ENCODE measurements at regions of chr12 and their contacts with region 1.

Region 1: GRCh38 chr12:100142851-100143559 is at the start of gene BLTP3B:
- DNase-seq: peak; percentile 92
- ATAC-seq: peak; percentile 91
- H3K4me3 Mint-ChIP-seq: peak within 1 kb of the TSS; percentile 95
- H3K27ac Mint-ChIP-seq: peak within 1 kb of the TSS; percentile 97
- H3K4me1 Mint-ChIP-seq: peaks cover 41% of the 10 kb centered on the region
- H3K27me3 Mint-ChIP-seq: no peaks in the 10 kb centered on the region
- total RNA-seq, gene BLTP3B: 17.8 to 20.5 TPM

Region 2: GRCh38 chr12:100128512-100128908 is 14.5 kb before region 1 on chr12:
- CTCF ChIA-PET with region 1: interaction called, 21 read pairs
- POLR2A ChIA-PET with region 1: no interaction called
- DNase-seq: no peak
- ATAC-seq: no peak
- H3K4me3 Mint-ChIP-seq: no peak overlapping the region
- H3K27ac Mint-ChIP-seq: no peak overlapping the region
- H3K4me1 Mint-ChIP-seq: peaks cover 19% of the 10 kb centered on the region
- H3K27me3 Mint-ChIP-seq: no peaks in the 10 kb centered on the region

Region 3: GRCh38 chr12:100154474-100155247 is 11.7 kb after region 1 on chr12:
- CTCF ChIA-PET with region 1: interaction called, 21 read pairs
- POLR2A ChIA-PET with region 1: no interaction called
- DNase-seq: peak; percentile 80
- ATAC-seq: peak; percentile 78
- H3K4me3 Mint-ChIP-seq: no peak overlapping the region
- H3K27ac Mint-ChIP-seq: peak overlapping the region; percentile 59
- H3K4me1 Mint-ChIP-seq: peaks cover 9% of the 10 kb centered on the region
- H3K27me3 Mint-ChIP-seq: no peaks in the 10 kb centered on the region

Region 4: GRCh38 chr12:100189636-100190394 is 46.8 kb after region 1 on chr12:
- CTCF ChIA-PET with region 1: no interaction called
- POLR2A ChIA-PET with region 1: no interaction called
- DNase-seq: no peak
- ATAC-seq: no peak
- H3K4me3 Mint-ChIP-seq: no peak overlapping the region
- H3K27ac Mint-ChIP-seq: no peak overlapping the region
- H3K4me1 Mint-ChIP-seq: peaks cover 16% of the 10 kb centered on the region
- H3K27me3 Mint-ChIP-seq: no peaks in the 10 kb centered on the region